MCF 10A (cell line): ENCODE measurements at regions of chr7 and their contacts with region 1.

Region 1: DNA sequence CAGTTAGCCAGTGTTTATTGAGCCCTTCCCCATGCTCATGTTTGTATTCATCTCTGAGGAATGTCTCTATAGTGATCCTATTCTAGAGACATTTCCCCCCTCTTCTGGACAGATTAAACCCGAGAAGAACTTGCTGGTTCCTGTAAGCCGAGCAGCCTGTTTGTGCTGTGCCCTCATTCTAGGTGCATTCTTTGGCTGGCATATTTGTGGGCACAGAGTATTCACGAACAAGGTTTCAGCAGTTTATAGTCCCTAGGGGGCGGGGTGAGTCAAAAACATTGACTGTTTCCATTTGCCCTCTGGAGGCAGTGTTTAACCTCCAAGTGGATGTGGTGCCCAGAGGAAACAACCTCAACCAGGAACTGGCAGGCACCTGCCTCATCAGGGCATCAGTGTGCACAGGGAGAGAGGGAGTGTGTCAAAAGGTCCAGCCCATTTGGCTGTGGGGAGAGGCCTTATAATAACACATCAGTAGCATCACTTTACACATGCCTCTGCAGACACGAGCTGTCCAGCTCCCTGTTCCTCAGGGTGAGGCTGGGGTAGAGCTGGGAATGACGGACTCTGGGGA is 273.3 kb upstream of the LRGUK start:
- DNase-seq: peak; percentile 94
- H3K4me3 Mint-ChIP-seq: peak overlapping the region; percentile 64
- H3K27ac Mint-ChIP-seq: peak overlapping the region; percentile 94
- H3K4me1 Mint-ChIP-seq: peaks cover 33% of the 10 kb centered on the region
- H3K27me3 Mint-ChIP-seq: no peaks in the 10 kb centered on the region
- CTCF ChIP-seq: peak; percentile 55

Region 2: DNA sequence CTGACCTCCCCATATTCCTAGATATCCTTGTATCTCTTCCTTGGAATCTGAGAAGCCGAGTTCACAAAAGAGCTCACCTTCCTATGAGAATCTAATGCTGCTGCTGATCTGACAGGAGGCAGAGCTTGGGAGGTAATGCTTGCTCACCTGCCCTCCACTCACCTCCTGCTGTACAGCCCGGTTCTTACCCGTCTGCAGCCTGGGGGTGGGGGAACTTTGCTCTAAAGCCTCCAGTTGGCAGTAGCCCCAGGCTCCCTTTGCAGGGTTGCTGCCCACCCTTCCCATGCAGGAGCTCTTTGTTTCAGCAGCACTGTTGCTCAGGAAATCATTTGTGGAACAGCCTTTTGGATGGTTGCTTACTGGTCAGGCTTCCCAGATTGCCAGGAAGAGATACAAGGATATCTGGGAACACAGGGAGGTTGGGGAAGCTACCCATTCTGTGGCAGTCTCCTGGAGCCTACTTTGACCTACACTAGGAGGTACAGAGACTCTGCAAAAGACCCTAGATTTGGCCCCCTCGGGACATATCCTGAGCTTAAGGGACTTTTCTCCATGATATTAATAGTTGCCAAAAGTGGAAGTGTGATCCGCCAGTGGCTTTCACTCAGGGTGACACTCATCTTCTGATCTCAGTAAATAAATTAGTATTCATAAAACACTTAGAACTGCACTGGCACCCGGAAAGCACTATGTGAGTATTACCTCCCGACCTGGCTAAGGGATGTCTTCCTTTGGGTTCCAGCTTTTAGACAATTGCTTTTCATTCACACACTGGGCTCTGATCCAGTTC is 1933.7 kb before region 1 on chr7:
- CTCF ChIA-PET with region 1: no interaction called
- POLR2A ChIA-PET with region 1: no interaction called
- intact Hi-C with region 1: no loop called
- DNase-seq: no peak
- H3K4me3 Mint-ChIP-seq: no peak overlapping the region
- H3K27ac Mint-ChIP-seq: no peak overlapping the region
- H3K4me1 Mint-ChIP-seq: no peaks in the 10 kb centered on the region
- H3K27me3 Mint-ChIP-seq: peaks cover 8% of the 10 kb centered on the region
- CTCF ChIP-seq: no peak

Region 3: GRCh38 chr7:133230591-133231194 is 623.1 kb before region 1 on chr7:
- CTCF ChIA-PET with region 1: no interaction called
- POLR2A ChIA-PET with region 1: no interaction called
- intact Hi-C with region 1: loop called (anchors 5 kb)
- DNase-seq: peak; percentile 69
- H3K4me3 Mint-ChIP-seq: no peak overlapping the region
- H3K27ac Mint-ChIP-seq: no peak overlapping the region
- H3K4me1 Mint-ChIP-seq: no peaks in the 10 kb centered on the region
- H3K27me3 Mint-ChIP-seq: peaks cover 34% of the 10 kb centered on the region
- CTCF ChIP-seq: peak; percentile 63

Region 4: GRCh38 chr7:133481676-133482075 is 372.1 kb before region 1 on chr7:
- CTCF ChIA-PET with region 1: interaction called, 3 read pairs
- POLR2A ChIA-PET with region 1: no interaction called
- intact Hi-C with region 1: loop called (anchors 10 kb)
- DNase-seq: peak; percentile 82
- H3K4me3 Mint-ChIP-seq: no peak overlapping the region
- H3K27ac Mint-ChIP-seq: peak overlapping the region; percentile 29
- H3K4me1 Mint-ChIP-seq: peaks cover 25% of the 10 kb centered on the region
- H3K27me3 Mint-ChIP-seq: no peaks in the 10 kb centered on the region
- CTCF ChIP-seq: no peak

Region 5: DNA sequence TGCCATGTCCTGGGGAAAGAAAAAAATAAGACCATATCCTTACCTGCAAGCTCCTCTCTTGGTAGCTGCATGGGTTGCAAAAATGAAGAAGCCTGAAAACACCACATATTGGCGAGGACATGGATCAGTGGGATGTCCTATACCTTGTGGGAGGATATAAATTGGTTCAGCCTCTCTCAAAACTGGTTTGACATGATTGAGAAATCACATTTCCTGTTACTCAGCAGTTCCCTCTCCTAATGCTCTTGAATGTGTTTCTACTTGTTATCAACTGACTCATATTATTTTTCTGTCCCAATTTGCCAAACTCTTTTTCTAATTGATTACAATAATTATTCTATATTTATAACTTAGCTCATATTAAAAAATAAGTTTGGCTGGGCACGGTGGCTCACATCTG is 220.7 kb before region 1 on chr7:
- CTCF ChIA-PET with region 1: no interaction called
- POLR2A ChIA-PET with region 1: interaction called, 3 read pairs
- intact Hi-C with region 1: loop called (anchors 10 kb)
- DNase-seq: peak; percentile 62
- H3K4me3 Mint-ChIP-seq: peak overlapping the region; percentile 25
- H3K27ac Mint-ChIP-seq: peak overlapping the region; percentile 42
- H3K4me1 Mint-ChIP-seq: peaks cover 14% of the 10 kb centered on the region
- H3K27me3 Mint-ChIP-seq: no peaks in the 10 kb centered on the region
- CTCF ChIP-seq: no peak

Region 6: DNA sequence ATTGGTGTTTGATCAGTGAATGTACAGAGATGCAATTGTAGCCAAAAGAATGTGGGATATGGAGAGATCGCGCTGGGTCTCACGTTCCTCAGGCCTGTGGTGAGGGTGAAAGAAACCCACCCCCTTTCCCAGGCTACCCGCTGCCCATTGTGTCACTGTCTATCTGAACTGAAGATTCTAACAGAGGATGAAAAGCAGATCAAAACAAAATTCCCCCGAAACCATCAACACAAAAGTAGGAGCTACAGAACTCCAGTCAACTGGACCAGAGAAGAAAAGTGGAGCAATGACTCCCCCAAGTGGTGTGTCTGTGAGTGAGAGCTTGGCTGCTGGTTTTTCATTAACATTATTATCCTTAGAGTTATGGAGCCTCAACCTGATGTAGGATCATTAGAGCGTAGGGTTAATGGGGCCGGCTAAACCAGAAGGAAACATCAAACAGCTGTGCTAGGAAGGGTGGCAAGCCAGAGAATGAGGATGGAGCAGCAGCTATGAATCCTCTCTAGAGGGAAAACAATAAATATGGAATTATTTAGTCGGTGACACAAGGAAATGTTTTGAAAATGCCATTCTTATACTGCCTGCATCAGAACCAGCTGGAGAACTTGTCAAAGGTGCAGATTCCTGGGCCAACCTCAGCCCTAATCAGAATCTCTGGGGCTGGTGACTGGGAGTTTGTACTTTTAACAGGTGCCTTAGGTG is 566.8 kb after region 1 on chr7:
- CTCF ChIA-PET with region 1: no interaction called
- POLR2A ChIA-PET with region 1: no interaction called
- intact Hi-C with region 1: loop called (anchors 1 kb)
- DNase-seq: peak; percentile 88
- H3K4me3 Mint-ChIP-seq: peak overlapping the region; percentile 26
- H3K27ac Mint-ChIP-seq: no peak overlapping the region
- H3K4me1 Mint-ChIP-seq: peaks cover 16% of the 10 kb centered on the region
- H3K27me3 Mint-ChIP-seq: no peaks in the 10 kb centered on the region
- CTCF ChIP-seq: peak; percentile 73